Activated CD4-positive, alpha-beta T cell treated with anti-CD3 and anti-CD28 coated beads, Interleukin-2, amount 10 ng/mL, durations not matched to agents 7 days and 5 days (primary cell): ENCODE measurements at regions of chr1 and their contacts with region 1.

Region 1: GRCh38 chr1:212256369-212256768 is 28.8 kb upstream of the PPP2R5A start:
- DNase-seq: peak; percentile 78
- H3K4me3 Mint-ChIP-seq: peak overlapping the region; percentile 56
- H3K27ac Mint-ChIP-seq: peak overlapping the region; percentile 93
- H3K4me1 Mint-ChIP-seq: peaks cover 80% of the 10 kb centered on the region
- H3K27me3 Mint-ChIP-seq: peaks cover 2% of the 10 kb centered on the region

Region 2: DNA sequence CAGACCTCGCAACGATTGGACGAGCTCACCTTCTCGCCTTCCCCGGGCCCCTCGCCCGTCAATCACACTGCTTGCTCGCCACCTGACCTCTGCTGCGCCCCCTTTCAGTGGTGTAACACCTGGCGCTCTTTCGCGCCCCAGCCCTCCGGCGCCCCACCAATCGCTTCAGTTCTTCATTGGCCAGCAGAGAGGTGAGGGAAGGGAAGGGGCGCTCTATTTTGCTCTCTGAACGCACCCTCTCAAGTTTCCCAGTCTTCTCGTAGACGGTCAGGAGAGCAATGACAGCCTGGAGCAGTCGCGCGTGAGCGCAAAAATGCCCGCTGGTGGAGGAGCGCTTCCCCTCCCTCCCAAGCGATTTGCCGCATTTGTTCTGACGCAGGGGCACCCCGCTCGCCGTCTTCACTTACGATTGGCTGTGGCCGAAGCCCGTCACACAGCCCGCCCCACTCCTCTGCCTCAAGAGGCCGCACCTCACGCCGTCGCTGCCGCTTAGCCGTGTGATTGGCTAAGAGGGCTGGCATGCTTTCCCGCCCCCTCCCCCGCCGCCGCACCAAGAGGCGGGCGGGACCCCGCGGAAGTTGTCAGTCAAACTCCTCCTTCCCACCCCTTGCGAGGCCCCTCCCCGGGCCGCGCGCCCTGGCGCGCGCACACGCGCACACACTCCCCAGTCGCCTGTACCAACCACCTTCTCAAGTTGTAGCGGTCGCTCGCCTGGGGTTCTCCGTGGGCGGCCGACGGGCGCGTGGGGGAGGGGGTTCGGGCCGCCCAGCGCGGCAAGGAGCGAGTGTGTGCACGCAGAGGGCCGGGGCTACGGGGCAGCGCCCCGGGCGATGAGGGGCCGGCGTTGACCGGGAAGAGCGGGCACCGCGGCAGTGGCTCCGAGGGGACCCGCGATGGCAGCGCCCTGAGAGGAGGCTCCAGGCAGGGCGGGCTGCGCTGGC is 28.6 kb after region 1 on chr1 and contains the start of gene PPP2R5A:
- CTCF ChIA-PET with region 1: interaction called, 11 read pairs
- POLR2A ChIA-PET with region 1: interaction called, 3 read pairs
- DNase-seq: peak; percentile 98
- H3K4me3 Mint-ChIP-seq: peak within 1 kb of the TSS; percentile 100
- H3K27ac Mint-ChIP-seq: peak within 1 kb of the TSS; percentile 99
- H3K4me1 Mint-ChIP-seq: peaks cover 43% of the 10 kb centered on the region
- H3K27me3 Mint-ChIP-seq: peaks cover 10% of the 10 kb centered on the region
- total RNA-seq, gene PPP2R5A: 59.9 to 63.9 TPM

Region 3: GRCh38 chr1:212328248-212328647 is 71.9 kb after region 1 on chr1:
- CTCF ChIA-PET with region 1: no interaction called
- POLR2A ChIA-PET with region 1: no interaction called
- DNase-seq: no peak
- H3K4me3 Mint-ChIP-seq: no peak overlapping the region
- H3K27ac Mint-ChIP-seq: no peak overlapping the region
- H3K4me1 Mint-ChIP-seq: peaks cover 10% of the 10 kb centered on the region
- H3K27me3 Mint-ChIP-seq: no peaks in the 10 kb centered on the region

Region 4: DNA sequence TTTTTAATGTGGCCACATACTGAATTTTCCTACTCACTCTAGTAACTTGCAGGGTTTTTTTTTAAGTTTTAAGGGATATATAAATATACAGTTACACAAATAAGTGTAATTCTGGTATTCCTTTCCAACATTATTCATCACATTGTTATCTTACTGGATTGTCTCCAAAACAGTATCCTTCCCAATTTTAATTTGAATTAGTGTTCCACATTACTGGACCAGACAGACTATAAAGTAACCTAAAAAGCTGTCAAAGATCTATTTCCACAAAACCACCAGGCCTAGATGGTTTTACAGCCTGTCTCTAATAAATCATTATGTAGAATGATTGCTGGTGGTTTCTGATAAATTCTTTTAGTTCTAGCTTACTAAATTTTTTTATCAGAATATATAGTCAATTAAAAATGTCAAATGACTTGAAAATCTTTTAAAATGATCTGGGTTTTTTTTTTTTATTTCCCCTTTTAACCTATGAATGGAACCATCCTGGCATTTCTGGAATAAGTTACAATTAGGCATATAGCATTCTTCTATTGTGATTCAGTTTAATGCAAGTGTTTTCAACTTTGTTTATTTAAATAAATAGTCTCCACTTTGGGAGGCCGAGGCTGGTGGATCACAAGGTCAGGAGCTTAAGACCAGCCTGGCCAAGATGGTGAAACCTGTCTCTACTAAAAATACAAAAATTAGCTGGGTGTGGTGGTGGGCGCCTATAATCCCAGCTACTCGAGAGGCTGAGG is 99.0 kb after region 1 on chr1:
- CTCF ChIA-PET with region 1: no interaction called
- POLR2A ChIA-PET with region 1: no interaction called
- DNase-seq: no peak
- H3K4me3 Mint-ChIP-seq: no peak overlapping the region
- H3K27ac Mint-ChIP-seq: no peak overlapping the region
- H3K4me1 Mint-ChIP-seq: peaks cover 13% of the 10 kb centered on the region
- H3K27me3 Mint-ChIP-seq: no peaks in the 10 kb centered on the region

Region 5: GRCh38 chr1:212388985-212389716 is 132.8 kb after region 1 on chr1:
- CTCF ChIA-PET with region 1: no interaction called
- POLR2A ChIA-PET with region 1: no interaction called
- DNase-seq: no peak
- H3K4me3 Mint-ChIP-seq: no peak overlapping the region
- H3K27ac Mint-ChIP-seq: no peak overlapping the region
- H3K4me1 Mint-ChIP-seq: no peaks in the 10 kb centered on the region
- H3K27me3 Mint-ChIP-seq: no peaks in the 10 kb centered on the region